Sciatic nerve (tissue), 2 donors: ENCODE measurements at regions of chr1 and their contacts with region 1.

Region 1: GRCh38 chr1:78385744-78386462 is 104.9 kb upstream of the PTGFR start:
- DNase-seq: no peak
- ATAC-seq: no peak

Region 2: DNA sequence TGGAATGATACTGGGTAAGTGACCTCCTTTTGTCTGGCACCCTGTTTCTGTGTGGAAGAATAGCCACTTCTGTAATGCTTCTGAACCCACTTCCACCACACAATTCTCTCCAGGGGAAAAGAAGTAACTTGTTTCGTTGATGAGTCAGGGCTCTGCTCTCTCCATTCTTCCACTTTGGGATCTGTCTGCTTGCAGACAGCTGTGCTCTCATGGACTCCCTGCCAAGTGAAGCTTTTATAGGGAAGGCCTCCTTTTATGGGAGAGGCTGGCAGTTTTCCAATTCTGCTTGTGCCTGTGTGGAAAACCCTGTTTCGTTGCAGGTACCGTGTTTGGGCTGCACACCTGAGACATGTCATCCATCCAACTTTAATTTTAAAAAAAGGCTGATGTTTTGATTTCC is 209.5 kb before region 1 on chr1:
- intact Hi-C with region 1: loop called (anchors 5 kb)
- DNase-seq: no peak
- ATAC-seq: peak; percentile 71

Region 3: DNA sequence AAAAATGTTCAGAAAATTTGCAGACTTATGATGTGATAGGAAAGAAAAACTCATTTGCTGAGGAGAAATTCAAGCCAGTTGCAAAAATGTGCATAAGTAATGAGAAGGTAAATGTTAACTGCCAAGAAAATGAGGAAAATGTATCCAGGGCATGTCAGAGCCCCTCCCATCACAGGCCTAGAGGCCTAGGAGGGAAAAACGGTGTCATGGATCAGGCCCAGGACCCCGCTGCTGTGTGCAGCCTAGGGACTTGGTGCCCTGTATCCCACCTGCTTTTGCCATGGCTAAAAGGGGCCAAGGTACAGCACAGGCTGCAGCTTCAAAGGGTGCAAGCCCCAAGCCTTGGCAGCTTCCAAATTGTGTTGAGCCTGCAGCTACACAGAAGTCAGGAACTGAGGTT is 834.6 kb after region 1 on chr1:
- intact Hi-C with region 1: loop called (anchors 10 kb)
- DNase-seq: no peak
- ATAC-seq: no peak